ENCODE measurements at regions of chr11 and their contacts with region 1.

Region 1: GRCh38 chr11:113305440-113306336 is 8.7 kb upstream of the TTC12 start:
- DNase-seq: peak; percentile 91
- H3K4me3 ChIP-seq: no peak overlapping the region
- H3K27ac ChIP-seq: no peak overlapping the region
- H3K4me1 ChIP-seq: peaks cover 0 to 8% (median 0%) of the 10 kb centered on the region in 6 donors
- H3K27me3 ChIP-seq: no peaks in the 10 kb centered on the region
- CTCF ChIP-seq: peak; percentile 58 to 89 (median 86)
- POLR2A ChIP-seq: no peak

Region 2: DNA sequence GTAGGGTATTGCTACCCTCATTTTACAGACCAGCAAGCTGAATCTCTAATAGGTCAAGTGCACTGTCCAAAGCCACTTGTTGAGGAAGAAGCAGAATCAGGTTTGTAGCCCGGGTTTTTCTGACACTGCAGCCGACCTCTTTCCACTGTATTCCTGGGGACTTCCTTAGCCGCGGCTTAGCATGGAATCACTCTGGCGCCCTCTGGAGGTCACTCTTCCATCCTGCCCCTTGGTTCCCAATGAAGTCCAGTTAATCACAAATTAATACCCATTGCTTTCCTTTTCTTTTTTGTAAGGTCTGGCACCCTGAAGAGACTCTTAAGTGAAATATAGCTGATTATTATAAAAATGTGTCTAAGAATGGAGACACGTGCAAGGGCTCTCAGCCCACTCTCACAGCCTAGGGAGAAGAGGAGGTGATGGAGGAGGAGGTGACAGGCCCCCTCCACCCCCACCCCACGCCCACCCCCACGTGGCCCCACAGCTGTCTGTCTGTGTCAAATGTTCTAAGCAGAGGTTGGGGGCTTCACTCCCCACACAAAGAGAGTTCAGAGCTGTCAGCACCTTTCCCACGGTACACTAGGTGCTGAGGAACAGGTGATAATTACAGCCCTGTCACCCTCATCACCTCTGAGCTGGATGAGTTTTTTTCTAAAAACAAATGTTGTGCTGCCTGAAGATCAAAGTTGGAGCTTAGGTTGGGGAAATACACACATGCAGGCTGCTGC is 227.2 kb after region 1 on chr11:
- intact Hi-C with region 1: loop called (anchors 5 kb)
- DNase-seq: no peak
- H3K4me3 ChIP-seq: no peak overlapping the region
- H3K27ac ChIP-seq: no peak overlapping the region
- H3K4me1 ChIP-seq: peaks cover 0 to 8% (median 0%) of the 10 kb centered on the region in 6 donors
- H3K27me3 ChIP-seq: peaks cover 0 to 16% (median 4%) of the 10 kb centered on the region in 7 donors
- CTCF ChIP-seq: peak; percentile 44 to 88 (median 71)
- POLR2A ChIP-seq: no peak

Region 3: DNA sequence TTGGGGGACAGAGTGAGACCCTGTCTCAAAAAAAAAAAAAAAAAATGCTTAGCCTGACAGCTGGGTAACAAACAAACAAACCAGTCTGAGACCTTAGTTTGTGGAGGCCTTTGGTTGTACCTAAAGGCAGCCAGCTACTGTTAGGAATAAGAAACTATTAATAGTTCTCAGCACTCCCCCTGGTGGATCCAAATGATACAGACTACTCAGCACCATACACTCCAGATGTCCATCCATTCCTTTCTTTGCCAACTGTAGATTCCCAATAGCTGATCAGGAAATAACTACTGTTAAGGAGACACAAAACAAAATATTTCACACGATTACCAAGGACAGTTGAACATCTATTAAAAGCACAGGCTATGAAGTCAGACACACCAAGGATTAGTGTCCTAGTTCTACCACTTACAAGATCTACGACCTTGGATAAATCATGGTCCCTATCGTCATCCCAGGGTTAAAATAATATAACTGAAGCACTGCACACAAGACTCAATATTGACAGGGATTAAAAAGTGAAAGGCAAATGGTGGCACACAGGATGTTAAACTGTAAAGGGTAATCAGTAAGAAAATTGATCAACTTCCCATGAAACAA is 491.1 kb after region 1 on chr11:
- intact Hi-C with region 1: loop called (anchors 10 kb)
- DNase-seq: no peak
- H3K4me3 ChIP-seq: no peak overlapping the region
- H3K27ac ChIP-seq: no peak overlapping the region
- H3K4me1 ChIP-seq: no peaks in the 10 kb centered on the region
- H3K27me3 ChIP-seq: no peaks in the 10 kb centered on the region
- CTCF ChIP-seq: peak in 8 of 11 experiments; percentile 39 to 66 (median 60)
- POLR2A ChIP-seq: no peak

Measured in spleen (tissue), 13 donors.